Caco-2 (cell line): ENCODE measurements at regions of chr2 and their contacts with region 1.

Region 1: GRCh38 chr2:132670496-132671150 is 618 bp upstream of the LYPD1 start:
- DNase-seq: peak; percentile 55 to 70
- H3K4me3 ChIP-seq: peak overlapping the region; percentile 53
- H3K4me3 Mint-ChIP-seq: peak overlapping the region; percentile 74
- H3K27ac Mint-ChIP-seq: no peak overlapping the region
- H3K4me1 ChIP-seq: peaks cover 11% of the 10 kb centered on the region
- H3K4me1 Mint-ChIP-seq: peaks cover 9% of the 10 kb centered on the region
- H3K27me3 ChIP-seq: no peaks in the 10 kb centered on the region; the same call in 1 of the 2 replicates
- H3K27me3 Mint-ChIP-seq: no peaks in the 10 kb centered on the region
- CTCF ChIP-seq: peak in 1 of 2 experiments; percentile 25

Region 2: DNA sequence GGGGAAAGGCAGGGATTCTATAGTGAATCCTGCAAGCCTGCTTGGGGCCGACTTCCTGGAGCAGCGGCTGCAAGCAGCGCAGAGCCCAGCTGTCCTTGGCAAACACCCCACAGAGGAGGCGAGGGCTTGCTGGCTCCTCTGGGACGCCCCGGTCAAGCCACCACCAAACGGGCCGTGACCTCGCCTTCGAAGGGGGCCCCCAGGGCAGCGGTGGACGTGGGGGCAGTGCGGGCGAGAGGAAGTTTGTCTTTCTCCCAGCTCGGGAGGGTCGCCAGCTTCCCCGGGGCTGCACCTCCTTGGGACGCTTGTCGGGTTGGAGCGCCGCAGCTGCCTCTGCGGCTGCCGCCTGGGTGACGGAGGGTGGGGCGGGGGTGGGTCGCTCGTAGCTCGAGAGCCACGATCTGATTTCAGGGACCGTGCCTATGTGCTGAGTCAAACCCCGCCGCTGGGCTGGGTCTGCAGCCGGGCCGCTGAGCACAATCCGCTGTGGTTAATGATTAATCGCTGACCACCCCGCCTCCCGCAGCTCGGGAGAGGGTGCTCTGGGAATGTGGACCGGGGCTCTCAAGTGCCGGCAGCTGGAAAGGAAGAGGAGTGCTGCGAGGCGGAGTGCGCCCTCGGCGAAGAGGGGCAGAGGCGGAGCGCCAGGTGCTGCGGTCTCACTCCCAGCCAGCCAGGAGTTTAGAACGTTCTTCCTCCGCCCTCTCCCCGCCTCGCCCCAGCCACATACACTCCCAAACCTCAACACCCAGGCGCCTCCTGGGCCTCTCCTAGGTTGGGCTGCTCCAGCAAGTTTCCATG is 254.3 kb before region 1 on chr2 and contains the start of gene GPR39:
- CTCF ChIA-PET with region 1: no interaction called
- POLR2A ChIA-PET with region 1: no interaction called
- intact Hi-C with region 1: loop called (anchors 5 kb)
- DNase-seq: peak; percentile 99
- H3K4me3 ChIP-seq: peak within 1 kb of the TSS; percentile 59
- H3K4me3 Mint-ChIP-seq: peak within 1 kb of the TSS; percentile 84
- H3K27ac Mint-ChIP-seq: peak within 1 kb of the TSS; percentile 97
- H3K4me1 ChIP-seq: peaks cover 51% of the 10 kb centered on the region
- H3K4me1 Mint-ChIP-seq: peaks cover 49% of the 10 kb centered on the region
- H3K27me3 ChIP-seq: no peaks in the 10 kb centered on the region
- H3K27me3 Mint-ChIP-seq: no peaks in the 10 kb centered on the region
- CTCF ChIP-seq: no peak
- total RNA-seq, gene GPR39: 26.8 and 28.7 TPM in 2 replicates

Region 3: GRCh38 chr2:132620115-132620514 is 50.5 kb before region 1 on chr2:
- CTCF ChIA-PET with region 1: no interaction called
- POLR2A ChIA-PET with region 1: no interaction called
- intact Hi-C with region 1: no loop called
- DNase-seq: no peak
- H3K4me3 ChIP-seq: no peak overlapping the region
- H3K4me3 Mint-ChIP-seq: no peak overlapping the region
- H3K27ac Mint-ChIP-seq: no peak overlapping the region
- H3K4me1 ChIP-seq: no peaks in the 10 kb centered on the region; the same call in 1 of the 2 replicates
- H3K4me1 Mint-ChIP-seq: peaks cover 9% of the 10 kb centered on the region
- H3K27me3 ChIP-seq: no peaks in the 10 kb centered on the region
- H3K27me3 Mint-ChIP-seq: no peaks in the 10 kb centered on the region
- CTCF ChIP-seq: no peak

Region 4: DNA sequence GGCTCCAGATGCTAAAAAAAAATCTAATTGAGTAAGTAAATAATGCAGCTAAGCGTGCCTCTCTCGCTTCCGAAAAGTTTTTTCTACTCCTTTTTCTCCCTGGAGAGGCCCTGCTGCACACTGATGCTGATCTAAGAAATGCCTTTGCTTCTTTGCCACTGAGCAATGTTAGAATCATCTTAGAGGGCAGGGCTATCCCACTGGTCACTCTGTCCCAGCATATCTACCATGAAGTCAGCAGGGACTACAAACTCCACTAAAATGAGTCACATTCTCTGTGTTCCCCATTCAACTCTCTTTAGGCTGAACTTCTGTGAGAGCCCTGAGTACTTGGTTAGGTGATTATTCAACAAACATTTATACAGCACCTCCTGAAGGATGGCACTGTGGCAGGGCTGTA is 126.9 kb after region 1 on chr2:
- CTCF ChIA-PET with region 1: no interaction called
- POLR2A ChIA-PET with region 1: no interaction called
- intact Hi-C with region 1: loop called (anchors 10 kb)
- DNase-seq: no peak
- H3K4me3 ChIP-seq: no peak overlapping the region
- H3K4me3 Mint-ChIP-seq: no peak overlapping the region
- H3K27ac Mint-ChIP-seq: no peak overlapping the region
- H3K4me1 ChIP-seq: no peaks in the 10 kb centered on the region
- H3K4me1 Mint-ChIP-seq: no peaks in the 10 kb centered on the region
- H3K27me3 ChIP-seq: no peaks in the 10 kb centered on the region
- H3K27me3 Mint-ChIP-seq: no peaks in the 10 kb centered on the region
- CTCF ChIP-seq: no peak

Region 5: DNA sequence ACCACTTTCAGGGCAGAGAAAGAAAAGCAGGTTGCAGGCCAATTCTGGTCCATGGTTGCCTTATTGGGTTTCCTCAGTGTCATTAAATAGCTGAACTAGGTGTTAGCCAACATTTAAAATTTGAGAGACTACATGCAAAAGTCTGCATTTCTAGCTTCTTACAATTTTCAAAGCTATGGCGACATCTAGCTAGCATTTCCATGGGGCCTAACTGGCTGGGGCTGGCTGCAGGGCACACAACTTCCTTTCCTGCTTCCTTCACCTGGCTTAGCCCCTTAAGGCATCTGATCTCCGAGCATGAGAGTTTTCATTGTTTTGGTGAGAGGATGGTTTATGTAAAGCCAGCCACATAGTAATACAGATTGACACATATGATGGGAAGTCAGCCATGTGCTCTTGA is 182.5 kb after region 1 on chr2:
- CTCF ChIA-PET with region 1: no interaction called
- POLR2A ChIA-PET with region 1: no interaction called
- intact Hi-C with region 1: loop called (anchors 2 kb)
- DNase-seq: no peak
- H3K4me3 ChIP-seq: no peak overlapping the region
- H3K4me3 Mint-ChIP-seq: no peak overlapping the region
- H3K27ac Mint-ChIP-seq: no peak overlapping the region
- H3K4me1 ChIP-seq: no peaks in the 10 kb centered on the region
- H3K4me1 Mint-ChIP-seq: no peaks in the 10 kb centered on the region
- H3K27me3 ChIP-seq: no peaks in the 10 kb centered on the region
- H3K27me3 Mint-ChIP-seq: no peaks in the 10 kb centered on the region
- CTCF ChIP-seq: peak in 1 of 2 experiments; percentile 13